Activated CD4-positive, alpha-beta T cell treated with anti-CD3 and anti-CD28 coated beads for 36 hours (primary cell): ENCODE measurements at regions of chr6 and their contacts with region 1.

Region 1: DNA sequence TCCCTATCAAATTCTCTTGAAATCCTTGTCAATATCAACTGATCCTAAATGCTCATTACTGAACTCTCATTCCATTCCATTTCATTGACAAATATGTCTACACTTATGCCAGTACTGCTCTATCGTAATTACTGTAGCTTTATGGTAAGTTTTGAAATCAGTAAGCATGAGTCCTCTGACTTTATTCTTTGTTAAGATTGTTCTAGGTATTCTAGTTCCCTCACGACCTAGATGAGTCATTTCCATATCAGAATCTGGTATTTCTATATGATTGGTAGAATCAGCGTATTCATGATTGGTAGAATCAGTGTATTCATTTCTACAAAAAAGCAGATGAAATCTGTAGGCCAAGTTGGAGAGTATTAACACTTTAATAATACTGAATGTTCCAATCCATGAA is 318.6 kb upstream of the RUNX2 start:
- DNase-seq: no peak
- ATAC-seq: peak; percentile 98
- H3K4me3 Mint-ChIP-seq: no peak overlapping the region
- H3K27ac Mint-ChIP-seq: peak overlapping the region; percentile 10
- H3K4me1 Mint-ChIP-seq: peaks cover 16% of the 10 kb centered on the region
- H3K27me3 Mint-ChIP-seq: no peaks in the 10 kb centered on the region

Region 2: DNA sequence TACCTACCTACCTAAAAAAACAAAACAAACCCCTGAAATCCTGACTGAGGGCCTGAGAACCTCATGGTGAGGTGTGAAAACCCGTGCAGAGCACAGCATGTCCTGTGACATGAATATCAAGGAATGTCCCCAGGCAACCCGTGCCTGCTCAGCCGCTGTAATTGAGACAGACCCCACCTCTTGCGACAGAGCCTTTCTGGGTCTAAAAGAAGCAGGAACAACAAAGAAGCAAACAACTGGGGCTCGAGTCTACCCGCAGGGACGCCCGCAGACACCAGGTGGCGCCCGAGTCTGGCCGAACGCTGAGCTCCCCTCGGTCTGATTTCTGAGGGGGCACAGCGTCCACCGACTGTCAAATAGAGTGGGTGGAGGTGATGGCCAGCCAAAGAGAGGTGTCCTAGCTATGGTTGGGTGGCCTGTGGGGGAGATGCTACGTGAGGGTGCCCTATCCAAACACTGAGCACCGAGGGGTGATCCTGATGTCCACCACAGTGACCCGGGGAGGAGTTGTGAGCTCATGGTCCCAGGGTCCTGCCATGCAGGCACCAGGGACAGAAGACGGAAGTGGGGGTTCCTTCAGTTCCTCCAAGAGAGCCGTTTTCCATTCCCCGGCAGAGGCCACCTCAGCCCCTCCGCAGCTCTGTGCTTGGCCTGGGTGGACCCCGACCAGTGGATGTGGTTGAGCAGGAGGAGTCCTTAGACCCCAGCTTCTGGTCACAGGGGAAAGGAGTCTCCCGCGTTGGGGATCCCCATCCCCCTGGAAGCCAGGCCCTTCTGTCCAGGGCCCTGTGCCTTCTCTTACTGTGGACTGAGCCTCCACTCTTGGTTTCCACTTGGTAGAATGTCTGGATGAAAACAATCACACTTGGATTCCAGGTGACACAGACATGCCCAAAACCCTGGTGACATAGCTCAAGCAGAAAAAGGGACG is 353.9 kb before region 1 on chr6:
- CTCF ChIA-PET with region 1: no interaction called
- POLR2A ChIA-PET with region 1: no interaction called
- intact Hi-C with region 1: loop called in 1 of 2 experiments (anchors 5 kb)
- DNase-seq: peak; percentile 85
- ATAC-seq: peak; percentile 77
- H3K4me3 Mint-ChIP-seq: no peak overlapping the region
- H3K27ac Mint-ChIP-seq: peak overlapping the region; percentile 75
- H3K4me1 Mint-ChIP-seq: peaks cover 13% of the 10 kb centered on the region
- H3K27me3 Mint-ChIP-seq: peaks cover 4% of the 10 kb centered on the region

Region 3: GRCh38 chr6:44976719-44977641 is 32.6 kb before region 1 on chr6:
- CTCF ChIA-PET with region 1: no interaction called
- POLR2A ChIA-PET with region 1: no interaction called
- intact Hi-C with region 1: loop called in 1 of 2 experiments (anchors 2 kb)
- DNase-seq: no peak
- ATAC-seq: peak; percentile 81
- H3K4me3 Mint-ChIP-seq: peak overlapping the region; percentile 2
- H3K27ac Mint-ChIP-seq: peak overlapping the region; percentile 68
- H3K4me1 Mint-ChIP-seq: peaks cover 46% of the 10 kb centered on the region
- H3K27me3 Mint-ChIP-seq: no peaks in the 10 kb centered on the region

Region 4: DNA sequence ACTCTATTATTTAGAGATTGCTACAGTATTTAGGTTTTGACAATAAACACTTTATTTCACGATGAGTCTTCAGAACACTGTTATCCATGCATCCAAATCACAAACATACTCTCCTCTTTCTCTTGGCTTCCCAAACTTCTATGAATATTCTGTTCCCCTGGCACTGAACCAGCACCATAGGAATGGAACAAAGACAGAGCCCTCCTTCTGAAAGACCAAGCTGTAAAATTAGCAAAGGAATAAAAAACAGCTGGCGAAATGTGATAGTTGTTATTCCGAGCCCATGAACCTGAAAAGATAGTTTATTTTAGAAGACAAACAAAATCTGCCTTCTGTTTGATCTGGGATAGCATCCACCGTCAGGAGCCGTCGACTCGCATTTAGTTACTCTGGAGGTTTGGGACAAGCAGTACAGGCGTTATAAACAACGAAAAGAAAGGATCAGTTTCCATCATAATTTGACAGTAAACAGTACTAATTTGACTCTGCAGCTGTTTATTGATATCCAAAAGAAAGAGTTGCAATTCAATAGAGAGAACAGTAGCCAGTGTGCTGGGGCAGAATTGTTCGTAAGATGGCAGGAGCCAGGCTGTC is 844.7 kb after region 1 on chr6:
- CTCF ChIA-PET with region 1: no interaction called
- POLR2A ChIA-PET with region 1: no interaction called
- intact Hi-C with region 1: no loop called
- DNase-seq: no peak
- ATAC-seq: no peak
- H3K4me3 Mint-ChIP-seq: no peak overlapping the region
- H3K27ac Mint-ChIP-seq: no peak overlapping the region
- H3K4me1 Mint-ChIP-seq: no peaks in the 10 kb centered on the region
- H3K27me3 Mint-ChIP-seq: peaks cover 19% of the 10 kb centered on the region